Calu3 (cell line): ENCODE measurements at regions of chr9 and their contacts with region 1.

Region 1: GRCh38 chr9:33225319-33226149 is 14.4 kb upstream of the SPINK4 start:
- DNase-seq: peak; percentile 70
- H3K4me3 Mint-ChIP-seq: no peak overlapping the region
- H3K27ac Mint-ChIP-seq: no peak overlapping the region
- H3K4me1 Mint-ChIP-seq: peaks cover 22% of the 10 kb centered on the region
- H3K27me3 Mint-ChIP-seq: no peaks in the 10 kb centered on the region
- CTCF ChIP-seq: peak; percentile 33

Region 2: GRCh38 chr9:33081128-33081851 is 144.2 kb before region 1 on chr9:
- CTCF ChIA-PET with region 1: no interaction called
- intact Hi-C with region 1: loop called (anchors 1 kb)
- DNase-seq: peak; percentile 36
- H3K4me3 Mint-ChIP-seq: no peak overlapping the region
- H3K27ac Mint-ChIP-seq: no peak overlapping the region
- H3K4me1 Mint-ChIP-seq: no peaks in the 10 kb centered on the region
- H3K27me3 Mint-ChIP-seq: no peaks in the 10 kb centered on the region
- CTCF ChIP-seq: peak; percentile 39

Region 3: DNA sequence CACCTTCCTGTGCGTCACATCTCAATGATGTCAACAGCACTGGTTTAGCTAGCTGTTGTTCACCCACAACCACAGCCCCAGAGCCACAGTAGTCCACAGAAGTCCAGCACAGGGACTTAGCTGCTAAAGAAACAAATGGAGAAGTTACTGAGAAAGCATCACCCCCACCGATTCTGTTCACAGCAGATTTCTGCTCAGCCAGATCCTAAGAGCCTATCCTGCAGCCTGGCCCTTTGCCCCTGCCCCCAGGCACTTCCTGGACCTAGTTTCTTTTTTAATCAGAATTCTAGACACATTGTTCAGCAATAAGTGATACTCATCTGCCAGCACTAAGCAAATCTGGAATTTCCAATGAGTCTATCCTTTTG is 65.8 kb before region 1 on chr9:
- CTCF ChIA-PET with region 1: no interaction called
- intact Hi-C with region 1: loop called (anchors 5 kb)
- DNase-seq: no peak
- H3K4me3 Mint-ChIP-seq: peak overlapping the region; percentile 58
- H3K27ac Mint-ChIP-seq: peak overlapping the region; percentile 96
- H3K4me1 Mint-ChIP-seq: peaks cover 66% of the 10 kb centered on the region
- H3K27me3 Mint-ChIP-seq: no peaks in the 10 kb centered on the region
- CTCF ChIP-seq: no peak

Region 4: DNA sequence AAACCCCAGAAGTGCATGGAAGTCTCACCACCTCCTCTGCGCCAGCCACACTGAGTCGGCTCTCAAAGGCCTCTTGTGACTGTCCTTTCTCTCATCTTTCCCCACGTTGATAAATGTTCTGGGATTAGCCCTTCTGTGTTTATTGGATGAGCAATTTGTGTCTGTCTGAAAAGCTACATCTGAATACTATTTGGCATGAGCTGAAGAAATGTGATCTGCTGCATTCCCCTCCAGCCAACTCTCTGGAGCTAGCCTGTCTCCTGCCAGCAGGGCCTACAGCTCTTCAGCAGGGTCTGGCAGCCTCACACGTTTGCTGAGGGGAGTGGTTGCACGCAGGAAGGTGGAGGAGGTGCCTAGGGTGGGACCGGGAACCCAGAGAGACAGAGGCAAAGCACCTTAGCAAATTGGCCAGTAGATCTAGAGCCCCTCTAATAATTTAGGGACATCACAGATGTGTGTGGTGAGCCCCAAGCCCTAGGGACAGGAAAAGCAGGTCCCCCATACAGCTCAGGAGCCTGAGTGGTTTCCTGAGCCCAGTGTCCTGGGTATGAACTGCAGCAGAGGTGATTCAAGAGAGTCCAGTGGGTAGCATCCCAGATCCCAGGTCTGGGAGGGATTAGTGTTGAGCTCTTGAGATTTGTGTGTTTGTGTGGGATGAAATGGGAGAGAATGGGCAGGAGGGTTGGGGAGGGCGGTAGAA is 37.9 kb before region 1 on chr9:
- CTCF ChIA-PET with region 1: no interaction called
- intact Hi-C with region 1: no loop called
- DNase-seq: no peak
- H3K4me3 Mint-ChIP-seq: no peak overlapping the region
- H3K27ac Mint-ChIP-seq: no peak overlapping the region
- H3K4me1 Mint-ChIP-seq: peaks cover 28% of the 10 kb centered on the region
- H3K27me3 Mint-ChIP-seq: no peaks in the 10 kb centered on the region
- CTCF ChIP-seq: no peak

Region 5: DNA sequence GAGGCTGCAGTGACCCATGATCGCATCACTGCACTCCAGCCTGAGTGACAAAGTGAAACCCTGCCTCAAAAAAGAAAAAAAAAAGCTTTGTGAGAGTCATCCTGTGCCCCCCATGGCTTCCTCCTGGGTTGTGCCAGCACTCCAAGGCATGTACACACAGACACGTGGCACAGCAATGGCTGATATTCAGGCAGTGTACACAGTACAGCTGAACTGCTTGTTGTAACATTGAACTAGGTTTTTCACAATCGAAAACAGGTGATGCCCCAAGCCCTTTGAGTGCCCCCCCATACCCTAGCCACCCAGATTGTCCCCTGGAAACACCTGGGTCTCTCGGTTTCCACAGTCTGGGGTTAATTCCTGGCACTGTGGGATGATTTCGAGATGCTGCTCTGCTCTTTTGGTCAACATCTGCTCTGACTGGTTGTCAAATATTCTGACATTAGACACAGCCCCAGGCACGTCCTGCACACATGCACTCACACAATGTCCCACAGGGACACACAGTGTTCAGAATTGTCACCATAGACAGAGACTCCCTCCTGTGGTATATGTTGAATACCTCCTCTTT is 23.6 kb after region 1 on chr9:
- CTCF ChIA-PET with region 1: no interaction called
- intact Hi-C with region 1: no loop called
- DNase-seq: no peak
- H3K4me3 Mint-ChIP-seq: no peak overlapping the region
- H3K27ac Mint-ChIP-seq: no peak overlapping the region
- H3K4me1 Mint-ChIP-seq: no peaks in the 10 kb centered on the region
- H3K27me3 Mint-ChIP-seq: no peaks in the 10 kb centered on the region
- CTCF ChIP-seq: no peak

Region 6: DNA sequence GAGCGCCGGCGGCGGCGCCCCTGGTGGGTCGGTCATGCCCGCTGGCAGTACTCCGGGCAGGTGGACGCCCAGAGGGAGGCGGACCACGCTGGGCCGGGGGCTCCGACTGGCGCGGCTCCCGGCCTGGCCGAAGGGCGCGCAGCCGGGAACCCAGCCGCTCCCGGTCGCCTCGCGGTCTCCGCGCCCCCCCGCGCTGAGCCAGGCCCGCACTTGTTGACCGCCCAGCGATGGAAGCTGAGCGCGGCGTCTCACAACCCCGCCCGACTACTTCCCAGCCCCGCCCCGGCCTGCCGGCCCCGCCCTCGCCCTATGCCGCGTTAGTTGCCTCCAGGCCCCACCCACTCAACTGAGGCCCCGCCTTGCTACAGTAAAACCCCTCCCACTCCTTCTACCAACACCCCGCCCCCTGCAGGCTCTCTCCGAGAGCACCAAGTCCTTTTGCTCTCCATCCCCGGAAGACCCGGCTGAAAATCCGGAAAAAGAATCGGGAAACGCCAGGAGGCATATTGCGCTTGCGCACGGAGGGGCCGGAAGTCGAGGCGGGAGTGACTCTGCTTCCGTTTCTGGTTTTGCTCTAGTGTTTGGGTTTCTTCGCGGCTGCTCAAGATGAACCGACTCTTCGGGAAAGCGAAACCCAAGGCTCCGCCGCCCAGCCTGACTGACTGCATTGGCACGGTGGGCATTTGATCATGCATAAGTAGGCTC is 39.1 kb after region 1 on chr9 and contains the starts of genes BAG1 and CHMP5:
- CTCF ChIA-PET with region 1: no interaction called
- intact Hi-C with region 1: loop called (anchors 1 kb)
- DNase-seq: peak; percentile 97
- H3K4me3 Mint-ChIP-seq: peak within 1 kb of the TSS; percentile 85
- H3K27ac Mint-ChIP-seq: peak within 1 kb of the TSS; percentile 86
- H3K4me1 Mint-ChIP-seq: peaks cover 32% of the 10 kb centered on the region
- H3K27me3 Mint-ChIP-seq: no peaks in the 10 kb centered on the region
- CTCF ChIP-seq: no peak
- total RNA-seq, gene BAG1: 35.2 and 46.2 TPM in 2 replicates
- total RNA-seq, gene CHMP5: 49.6 and 63.7 TPM in 2 replicates

Region 7: DNA sequence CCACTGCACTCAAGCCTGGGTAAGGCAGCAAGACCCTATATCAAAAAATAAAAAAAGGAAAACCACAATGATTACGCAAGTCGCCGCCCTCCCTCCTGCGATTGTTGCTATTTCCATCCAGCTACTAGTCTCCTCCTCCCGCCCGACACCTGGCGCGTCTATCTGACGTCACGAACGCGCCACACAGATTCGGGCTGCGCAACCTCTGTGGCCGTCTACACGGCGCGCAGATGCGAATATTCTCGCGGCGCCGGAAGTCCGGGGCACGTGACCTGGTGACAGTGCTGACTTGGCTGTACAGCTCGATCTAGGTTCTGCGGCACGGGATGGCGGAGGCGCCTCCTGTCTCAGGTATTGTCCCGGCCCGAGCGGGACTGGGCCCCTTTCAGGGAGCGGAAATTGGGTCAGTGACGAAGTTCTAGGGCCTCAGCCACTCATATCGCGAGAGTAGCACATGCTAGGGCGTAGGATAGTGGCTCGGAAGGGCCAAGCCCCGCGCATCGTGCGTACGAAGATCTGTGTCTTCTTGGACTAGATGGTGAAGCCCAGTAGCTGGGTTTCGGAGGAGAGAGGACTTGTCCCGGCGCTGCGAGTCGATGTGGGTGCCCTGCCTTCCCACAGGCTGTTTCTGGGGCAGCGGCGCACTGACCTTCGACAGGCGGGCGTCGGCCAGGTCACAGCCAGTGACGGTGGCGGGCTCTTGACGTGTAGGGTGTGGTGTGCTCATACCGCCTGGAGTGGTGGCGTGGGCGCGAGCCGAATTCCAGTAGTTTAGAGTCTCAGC is 64.9 kb after region 1 on chr9 and contains the start of gene NFX1:
- CTCF ChIA-PET with region 1: no interaction called
- intact Hi-C with region 1: loop called (anchors 5 kb)
- DNase-seq: peak; percentile 92
- H3K4me3 Mint-ChIP-seq: peak within 1 kb of the TSS; percentile 98
- H3K27ac Mint-ChIP-seq: peak within 1 kb of the TSS; percentile 100
- H3K4me1 Mint-ChIP-seq: peaks cover 14% of the 10 kb centered on the region
- H3K27me3 Mint-ChIP-seq: no peaks in the 10 kb centered on the region
- CTCF ChIP-seq: no peak
- total RNA-seq, gene NFX1: 27.3 and 31.1 TPM in 2 replicates